ENCODE measurements at regions of chrX and their contacts with region 1.

Region 1: GRCh38 chrX:13721819-13722519 is 12.5 kb downstream of the TRAPPC2 start:
- DNase-seq: peak; percentile 60
- H3K4me3 ChIP-seq: 0 out of 2 replicates have a peak overlapping the region, but pooled peaks have one; percentile 25
- H3K27ac ChIP-seq: peak overlapping the region; percentile 82
- H3K27me3 ChIP-seq: no peaks in the 10 kb centered on the region
- CTCF ChIP-seq: no peak

Region 2: DNA sequence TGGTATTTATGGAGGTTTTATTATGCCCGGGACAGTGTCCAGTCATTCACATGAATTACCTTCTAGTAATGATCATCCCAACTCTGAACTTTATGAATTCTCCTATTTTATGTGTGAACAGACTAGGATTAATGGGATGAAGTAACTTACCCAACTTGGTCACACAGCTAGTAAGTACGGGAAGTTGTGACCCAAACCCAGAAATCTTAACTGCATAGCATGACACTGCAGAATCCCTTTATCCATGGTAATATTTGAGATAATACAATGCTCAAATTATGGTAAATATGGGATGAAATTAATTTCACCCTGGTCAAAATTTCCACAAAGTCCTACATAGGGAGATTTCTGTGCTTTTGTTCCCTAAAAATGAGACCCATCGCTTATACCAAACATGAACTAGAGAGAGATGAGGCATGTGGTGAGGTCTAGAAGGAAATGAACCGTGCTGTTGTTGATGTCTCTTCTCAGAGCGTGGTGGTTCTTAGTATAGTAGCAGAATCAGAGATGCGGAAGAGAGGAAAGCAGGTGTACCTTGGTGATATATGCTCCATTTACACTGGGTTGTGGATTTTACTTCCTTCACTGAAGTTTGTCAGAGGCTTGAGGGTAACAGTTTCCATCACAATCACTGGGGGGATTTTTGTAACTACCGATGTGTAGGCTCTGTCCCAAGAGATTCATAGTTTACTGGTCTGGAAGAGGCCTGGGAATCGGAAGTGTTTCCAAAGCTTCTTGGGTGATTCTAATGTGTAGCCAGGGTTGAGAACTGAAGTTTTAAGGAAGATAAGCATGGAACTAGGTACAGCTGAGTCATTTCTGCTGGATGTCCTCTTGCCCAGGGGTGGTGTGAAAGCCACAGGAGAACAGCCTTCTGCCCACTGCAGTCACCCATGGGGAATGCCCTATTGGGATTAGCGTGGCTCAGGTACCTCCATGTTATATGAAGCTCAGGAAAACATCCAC is 647.4 kb before region 1 on chrX:
- CTCF ChIA-PET with region 1: no interaction called
- POLR2A ChIA-PET with region 1: interaction called, 12 read pairs
- DNase-seq: no peak
- H3K4me3 ChIP-seq: no peak overlapping the region
- H3K27ac ChIP-seq: no peak overlapping the region
- H3K27me3 ChIP-seq: no peaks in the 10 kb centered on the region
- CTCF ChIP-seq: no peak

Region 3: GRCh38 chrX:13734278-13735172 is 12.6 kb after region 1 on chrX and contains the starts of genes OFD1 and TRAPPC2:
- CTCF ChIA-PET with region 1: no interaction called
- POLR2A ChIA-PET with region 1: interaction called, 14 read pairs
- DNase-seq: peak; percentile 87
- H3K4me3 ChIP-seq: peak within 1 kb of the TSS; percentile 78
- H3K27ac ChIP-seq: peak within 1 kb of the TSS; percentile 81
- H3K27me3 ChIP-seq: no peaks in the 10 kb centered on the region
- CTCF ChIP-seq: no peak
- polyA plus RNA-seq, gene OFD1: 9.9 and 14.1 TPM in 2 replicates
- polyA plus RNA-seq, gene TRAPPC2: 9.7 and 11.1 TPM in 2 replicates

Region 4: DNA sequence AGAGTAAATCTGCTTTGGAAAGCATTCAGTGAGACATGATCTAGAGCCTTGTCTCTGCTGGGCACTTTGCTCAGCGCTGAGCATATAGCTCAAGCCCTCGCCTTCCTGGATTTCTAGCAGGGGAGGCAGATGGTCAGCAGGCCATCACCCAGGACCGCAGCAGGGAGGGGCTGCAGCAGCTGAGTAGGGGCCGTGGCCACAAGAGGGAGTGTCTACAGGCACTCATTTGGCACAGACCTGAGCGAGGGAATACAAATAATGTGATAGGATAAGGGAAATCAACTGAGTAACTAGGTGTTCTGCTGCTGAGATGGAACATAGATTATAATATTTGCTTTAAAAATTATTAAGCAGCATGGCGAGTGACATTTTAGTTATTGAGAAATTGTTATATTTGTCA is 42.8 kb after region 1 on chrX:
- CTCF ChIA-PET with region 1: no interaction called
- POLR2A ChIA-PET with region 1: no interaction called
- DNase-seq: no peak
- H3K4me3 ChIP-seq: no peak overlapping the region
- H3K27ac ChIP-seq: no peak overlapping the region
- H3K27me3 ChIP-seq: no peaks in the 10 kb centered on the region
- CTCF ChIP-seq: peak; percentile 19

Region 5: GRCh38 chrX:14029425-14030173 is 307.6 kb after region 1 on chrX and contains the start of gene GEMIN8:
- CTCF ChIA-PET with region 1: no interaction called
- POLR2A ChIA-PET with region 1: interaction called, 12 read pairs
- DNase-seq: peak; percentile 67
- H3K4me3 ChIP-seq: peak within 1 kb of the TSS; percentile 64
- H3K27ac ChIP-seq: peak within 1 kb of the TSS; percentile 73
- H3K27me3 ChIP-seq: no peaks in the 10 kb centered on the region
- CTCF ChIP-seq: no peak
- polyA plus RNA-seq, gene GEMIN8: 19.7 and 22.1 TPM in 2 replicates